ENCODE measurements at regions of chr1 and their contacts with region 1.

Region 1: DNA sequence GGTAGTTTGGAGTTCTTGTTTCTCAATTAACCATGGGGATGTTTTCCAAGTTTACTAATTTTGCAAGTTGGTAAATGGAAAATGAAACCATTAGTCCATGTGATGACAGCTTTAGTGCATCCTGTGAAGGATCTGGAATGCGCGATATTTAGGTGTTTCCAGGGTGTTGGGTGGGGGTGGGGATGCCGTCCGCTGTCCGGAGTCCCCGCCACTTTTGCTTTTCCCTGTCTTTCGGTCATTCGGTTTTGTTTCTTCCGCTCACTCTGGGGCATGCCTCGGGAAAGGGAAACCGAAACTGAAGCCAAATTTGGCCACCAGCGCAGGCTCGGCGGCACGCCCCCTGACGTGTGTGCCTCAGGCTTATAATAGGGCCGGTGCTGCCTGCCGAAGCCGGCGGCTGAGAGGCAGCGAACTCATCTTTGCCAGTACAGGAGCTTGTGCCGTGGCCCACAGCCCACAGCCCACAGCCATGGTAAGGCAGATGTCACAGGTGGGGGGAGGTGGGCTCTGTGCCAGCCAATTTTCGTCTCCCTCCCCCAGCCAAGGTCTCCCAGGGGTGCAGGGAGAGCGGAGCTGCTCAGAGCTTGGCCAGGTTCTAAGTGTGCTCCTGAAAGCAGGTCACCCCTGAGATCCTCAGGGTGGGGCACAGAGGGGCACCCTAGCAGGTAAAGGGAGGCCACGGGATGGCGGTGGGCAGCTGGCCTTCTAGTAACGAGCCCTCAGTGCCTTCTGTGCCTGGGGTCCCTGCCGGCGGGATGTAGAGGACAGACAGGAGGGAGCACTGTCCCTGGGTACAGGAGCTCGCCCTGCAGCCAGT is at the start of gene ISG15:
- DNase-seq: peak; percentile 73
- ATAC-seq: peak; percentile 87
- H3K4me3 ChIP-seq: peak within 1 kb of the TSS; percentile 69 to 98 (median 86)
- H3K27ac ChIP-seq: peak within 1 kb of the TSS; percentile 60
- H3K4me1 ChIP-seq: peaks cover 43% of the 10 kb centered on the region
- H3K27me3 ChIP-seq: no peaks in the 10 kb centered on the region; a peak in 1 of 5 replicates
- CTCF ChIP-seq: peak; percentile 30; the same call in 1 of the 2 replicates
- EP300 ChIP-seq: no peak
- POLR2A ChIP-seq: no peak
- RAD21 ChIP-seq: no peak
- total RNA-seq, gene ISG15: 54.9 and 68.4 TPM in 2 replicates

Region 2: DNA sequence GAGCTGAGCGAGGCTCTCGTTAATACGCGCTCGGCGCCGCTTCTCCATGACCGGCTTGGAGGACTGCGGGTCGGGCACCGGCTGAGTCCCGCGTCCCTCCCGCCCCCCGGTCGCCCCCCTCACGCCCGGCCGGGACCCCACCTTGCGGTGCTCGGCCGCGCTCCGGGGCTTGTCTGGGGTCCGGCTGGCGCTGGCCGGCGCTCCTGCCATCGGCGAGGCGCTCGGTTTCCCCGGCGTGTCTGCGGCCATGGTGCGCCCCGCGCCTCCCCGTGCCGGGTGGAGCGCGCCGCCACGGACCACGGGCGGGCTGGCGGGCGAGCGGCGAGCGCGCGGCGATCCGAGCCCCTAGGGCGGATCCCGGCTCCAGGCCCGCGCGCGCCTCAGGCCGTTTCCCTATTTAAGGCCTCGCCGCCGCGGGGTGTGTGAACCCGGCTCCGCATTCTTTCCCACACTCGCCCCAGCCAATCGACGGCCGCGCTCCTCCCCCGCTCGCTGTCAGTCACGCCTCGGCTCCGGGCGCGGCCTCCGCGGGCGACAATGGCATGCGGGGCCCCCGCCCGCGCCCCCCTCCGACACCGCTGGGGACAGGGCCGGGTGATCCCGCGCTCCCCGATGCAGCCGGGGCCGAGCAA is 13.5 kb before region 1 on chr1 and contains the start of gene HES4:
- CTCF ChIA-PET with region 1: no interaction called
- POLR2A ChIA-PET with region 1: interaction called, 61 read pairs
- in situ Hi-C with region 1: no loop called
- intact Hi-C with region 1: no loop called
- DNase-seq: peak; percentile 87
- ATAC-seq: peak; percentile 59
- H3K4me3 ChIP-seq: peak within 1 kb of the TSS; percentile 63 to 78 (median 78)
- H3K27ac ChIP-seq: peak within 1 kb of the TSS; percentile 97
- H3K4me1 ChIP-seq: peaks cover 63% of the 10 kb centered on the region
- H3K27me3 ChIP-seq: no peaks in the 10 kb centered on the region
- CTCF ChIP-seq: no peak
- EP300 ChIP-seq: no peak
- POLR2A ChIP-seq: no peak; a peak in 1 of 4 replicates
- RAD21 ChIP-seq: peak; percentile 17; the same call in 1 of the 2 replicates
- total RNA-seq, gene HES4: 4.4 and 8.8 TPM in 2 replicates

Region 3: GRCh38 chr1:1157426-1157913 is 144.2 kb after region 1 on chr1:
- CTCF ChIA-PET with region 1: no interaction called
- POLR2A ChIA-PET with region 1: no interaction called
- in situ Hi-C with region 1: no loop called
- intact Hi-C with region 1: no loop called
- DNase-seq: no peak
- ATAC-seq: no peak
- H3K4me3 ChIP-seq: peak overlapping the region in 1 of 3 experiments; percentile 54; a peak in 1 of 6 replicates
- H3K27ac ChIP-seq: peak overlapping the region; percentile 22
- H3K4me1 ChIP-seq: peaks cover 39% of the 10 kb centered on the region
- H3K27me3 ChIP-seq: no peaks in the 10 kb centered on the region
- CTCF ChIP-seq: no peak
- EP300 ChIP-seq: no peak
- POLR2A ChIP-seq: no peak
- RAD21 ChIP-seq: no peak

Measured in HepG2 (cell line).